K562 (cell line): ENCODE measurements at regions of chr1 and their contacts with region 1.

Region 1: GRCh38 chr1:166432655-166433054 is 265.9 kb upstream of the FAM78B start:
- DNase-seq: no peak
- ATAC-seq: no peak
- H3K4me3 ChIP-seq: no peak overlapping the region
- H3K27ac ChIP-seq: no peak overlapping the region
- H3K4me1 ChIP-seq: no peaks in the 10 kb centered on the region
- H3K27me3 ChIP-seq: peaks cover 0 to 6% of the 10 kb centered on the region in 2 experiments; a peak in 1 of 5 replicates
- CTCF ChIP-seq: no peak
- EP300 ChIP-seq: no peak
- POLR2A ChIP-seq: no peak
- RAD21 ChIP-seq: no peak

Region 2: DNA sequence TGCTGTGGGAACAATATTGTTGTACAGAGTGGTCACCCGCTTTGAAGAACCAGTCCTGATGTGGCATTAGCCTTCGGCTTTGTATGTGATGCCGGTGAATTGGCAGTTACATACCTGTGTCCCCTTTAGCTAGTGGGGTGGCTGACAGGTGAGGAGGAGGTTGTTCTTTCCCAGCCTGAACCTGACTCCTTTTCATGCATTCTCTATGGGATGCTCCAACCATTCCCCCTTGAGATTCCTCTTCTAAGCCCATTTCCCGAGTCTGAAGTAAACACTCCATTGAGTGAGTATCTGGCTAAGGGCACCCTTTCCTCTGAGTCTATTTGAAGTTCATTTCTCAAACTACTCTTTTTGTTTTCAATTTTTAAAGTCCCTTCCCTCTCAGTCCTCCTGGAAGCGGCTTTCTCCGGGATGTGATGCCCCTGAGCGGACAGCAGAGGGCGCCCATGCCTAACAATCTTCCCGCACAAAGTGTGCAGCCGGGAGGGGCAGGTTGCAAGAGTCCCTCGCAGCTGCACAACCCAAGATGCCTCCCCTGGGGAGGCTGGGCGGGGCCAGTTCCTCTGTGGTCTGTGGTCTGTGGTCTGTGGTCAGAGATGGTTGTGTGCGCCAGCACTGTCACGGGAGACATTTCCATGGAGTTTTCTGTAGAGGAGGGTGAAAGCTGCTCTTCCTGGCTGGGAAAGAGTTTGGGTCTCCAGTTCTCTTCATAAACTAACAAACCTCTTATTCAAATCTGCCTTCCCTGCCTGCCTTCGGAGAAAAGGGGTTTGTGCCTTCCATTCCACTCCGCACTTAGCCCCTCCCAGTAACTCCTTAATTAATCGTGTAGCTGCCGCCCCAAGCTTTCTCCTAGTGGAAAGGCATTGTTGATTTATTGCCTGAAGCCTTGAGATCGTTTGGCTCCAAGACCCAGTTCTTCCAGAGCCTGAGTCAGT is 1039.8 kb before region 1 on chr1:
- CTCF ChIA-PET with region 1: no interaction called
- POLR2A ChIA-PET with region 1: no interaction called
- in situ Hi-C with region 1: no loop called
- intact Hi-C with region 1: loop called (anchors 5 kb)
- DNase-seq: peak; percentile 90 to 98 (median 94)
- ATAC-seq: peak; percentile 100
- H3K4me3 ChIP-seq: no peak overlapping the region
- H3K27ac ChIP-seq: no peak overlapping the region
- H3K4me1 ChIP-seq: peaks cover 5 to 7% of the 10 kb centered on the region in 2 experiments; a peak in 3 of 5 replicates
- H3K27me3 ChIP-seq: peaks cover 0 to 4% of the 10 kb centered on the region in 2 experiments; a peak in 1 of 5 replicates
- CTCF ChIP-seq: peak; percentile 91 to 98 (median 96)
- EP300 ChIP-seq: 0 out of 2 replicates have a peak, but pooled peaks have one; percentile 39
- POLR2A ChIP-seq: no peak
- RAD21 ChIP-seq: peak; percentile 92 to 97

Region 3: DNA sequence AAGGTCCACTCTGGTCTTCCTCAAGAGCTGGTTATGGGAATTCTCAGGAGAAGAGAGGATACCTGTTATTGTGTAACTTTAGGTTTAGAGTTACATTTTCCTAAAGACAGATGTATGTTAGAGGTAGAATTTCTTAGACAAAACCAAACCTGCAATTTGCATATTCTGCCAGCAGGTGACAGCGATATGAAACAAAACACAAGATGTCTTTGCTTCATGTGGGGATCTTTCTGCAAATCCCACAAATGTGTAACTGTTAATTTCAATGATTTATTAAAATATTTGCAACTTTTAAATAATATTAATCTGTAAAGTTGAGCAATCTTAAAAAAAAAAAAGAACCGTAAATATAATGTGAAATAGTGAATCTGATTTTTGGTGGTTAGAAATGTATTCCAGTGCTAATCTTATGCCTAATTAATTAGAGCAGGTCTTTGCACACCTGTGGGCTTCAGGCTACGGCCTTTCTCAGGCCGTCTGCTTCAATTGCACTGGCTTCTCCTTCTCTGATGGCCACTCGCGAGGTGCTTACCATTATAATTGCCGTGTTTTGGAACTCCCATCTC is 299.3 kb before region 1 on chr1:
- CTCF ChIA-PET with region 1: no interaction called
- POLR2A ChIA-PET with region 1: no interaction called
- in situ Hi-C with region 1: no loop called
- intact Hi-C with region 1: loop called (anchors 1 kb)
- DNase-seq: peak; percentile 18 to 65 (median 47)
- ATAC-seq: no peak
- H3K4me3 ChIP-seq: no peak overlapping the region
- H3K27ac ChIP-seq: no peak overlapping the region
- H3K4me1 ChIP-seq: no peaks in the 10 kb centered on the region
- H3K27me3 ChIP-seq: peaks cover 0 to 7% of the 10 kb centered on the region in 2 experiments; a peak in 2 of 5 replicates
- CTCF ChIP-seq: peak; percentile 31 to 60 (median 57); a peak in 5 of 6 replicates
- EP300 ChIP-seq: no peak
- POLR2A ChIP-seq: no peak
- RAD21 ChIP-seq: peak; percentile 26 to 63; a peak in 2 of 4 replicates